ENCODE measurements at regions of chr11 and their contacts with region 1.

Region 1: DNA sequence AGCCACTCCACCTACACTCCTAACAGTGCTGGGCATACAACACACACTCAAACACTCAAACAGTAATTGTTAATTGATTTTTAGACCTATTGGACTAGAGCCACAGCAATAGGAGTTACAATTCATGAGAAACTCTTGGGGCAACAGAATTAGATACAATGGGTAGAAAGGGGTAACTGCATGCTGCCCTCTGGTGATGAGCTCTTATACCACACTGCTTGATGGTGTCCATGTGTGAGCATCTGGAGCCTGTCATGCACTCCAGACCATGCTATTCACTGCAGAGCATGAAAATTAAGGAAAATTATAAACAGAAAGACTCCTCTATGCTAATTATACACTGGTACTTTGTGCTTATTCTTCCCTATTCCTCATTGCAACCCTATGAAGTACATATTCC is 975.5 kb upstream of the CCDC90B start:
- DNase-seq: no peak

Region 2: DNA sequence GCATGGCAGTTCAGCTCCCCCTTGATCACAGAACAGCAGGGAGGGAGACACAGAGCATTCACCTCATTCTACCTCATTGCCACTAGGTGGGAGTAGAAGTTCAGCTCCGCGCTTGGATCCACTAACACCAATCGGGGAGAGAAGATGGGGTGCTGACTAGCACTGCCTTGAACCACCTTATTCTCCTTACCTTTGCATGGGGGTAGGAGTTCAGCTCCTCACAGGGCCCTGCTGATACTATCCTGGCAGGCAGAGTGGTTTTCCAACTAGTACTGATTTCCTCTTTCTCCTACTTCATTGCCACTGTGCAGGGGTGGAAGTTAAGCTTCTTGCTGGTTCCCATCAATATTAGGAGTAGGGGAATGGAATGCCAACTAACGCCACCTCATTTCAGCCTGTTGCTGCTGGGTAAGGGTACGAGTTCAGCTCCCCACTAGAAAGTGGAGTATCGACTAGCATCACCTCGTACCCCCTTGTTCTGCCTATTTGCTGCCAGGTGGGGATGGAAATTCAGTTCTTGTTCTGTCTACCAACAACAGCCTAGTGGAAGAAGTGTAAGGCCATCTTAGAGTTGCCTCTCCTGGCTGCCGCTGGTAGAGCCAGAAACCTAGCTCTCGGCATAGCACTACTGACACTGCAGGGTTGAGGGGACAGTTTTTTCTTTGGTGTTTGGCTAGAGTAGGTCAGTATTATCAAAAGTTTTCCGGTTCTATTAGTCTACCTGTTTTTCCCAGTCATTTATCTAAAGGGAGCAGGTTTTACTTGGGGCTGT is 424.6 kb before region 1 on chr11:
- intact Hi-C with region 1: loop called (anchors 10 kb)
- DNase-seq: no peak

Region 3: DNA sequence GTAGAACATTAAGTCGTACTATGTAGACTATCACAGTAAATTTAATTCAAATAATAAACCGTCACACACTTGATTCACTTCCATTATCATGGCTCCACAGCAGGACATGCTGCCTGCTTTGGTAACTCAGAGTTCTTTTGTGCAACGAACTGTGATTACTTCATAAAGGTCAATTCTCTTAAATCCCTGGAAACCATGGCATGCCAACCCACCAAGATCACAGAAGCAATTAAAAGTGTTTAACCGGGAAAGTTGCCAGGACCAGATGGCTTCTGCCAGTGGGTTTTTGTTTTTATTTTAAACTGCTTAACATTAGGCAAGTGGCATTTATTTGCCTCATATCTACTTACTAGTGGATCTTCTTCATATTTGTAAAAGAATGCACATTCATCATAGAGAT is 203.3 kb after region 1 on chr11:
- intact Hi-C with region 1: no loop called
- DNase-seq: no peak

Region 4: DNA sequence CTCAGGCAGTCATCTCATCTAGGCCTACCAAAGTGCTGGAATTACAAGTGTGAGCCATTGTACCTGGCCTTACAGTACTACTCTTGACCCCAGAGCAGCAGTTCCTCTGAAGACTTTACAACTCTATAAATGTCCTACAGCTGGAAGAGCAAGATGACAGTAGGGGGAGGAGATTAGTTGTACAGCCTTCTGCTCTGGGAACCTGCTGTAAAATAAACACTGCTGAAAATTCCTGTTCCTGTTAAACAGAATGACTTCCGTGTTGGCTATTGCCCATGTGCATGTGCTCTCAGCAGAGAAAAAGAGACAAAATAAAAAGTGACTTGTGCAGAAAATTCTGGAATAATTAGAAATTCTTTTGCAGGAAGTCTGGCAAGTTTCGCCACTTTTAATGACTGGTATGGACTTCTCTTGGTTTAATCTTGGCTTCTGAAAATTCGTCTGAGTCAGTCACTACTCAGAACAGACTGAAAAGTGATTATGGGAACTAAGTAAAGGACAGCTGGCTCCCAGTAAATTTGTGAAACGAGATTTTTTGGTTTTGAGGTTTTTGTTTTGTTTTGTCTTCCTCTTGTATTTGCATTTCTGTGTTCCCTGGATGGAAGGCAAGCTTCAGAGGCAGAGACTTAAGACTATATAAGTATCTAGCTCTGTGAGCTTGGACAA is 409.8 kb after region 1 on chr11:
- intact Hi-C with region 1: no loop called
- DNase-seq: no peak

Measured in cardiac septum (tissue), 1 donor.